ENCODE measurements at regions of chr6 and their contacts with region 1.

Region 1: GRCh38 chr6:113328886-113329381 is 528.2 kb upstream of the MARCKS start:
- DNase-seq: no peak
- CTCF ChIP-seq: no peak

Region 2: GRCh38 chr6:113340371-113340770 is 11.4 kb after region 1 on chr6:
- CTCF ChIA-PET with region 1: interaction called, 40 read pairs
- POLR2A ChIA-PET with region 1: no interaction called
- DNase-seq: no peak
- CTCF ChIP-seq: no peak

Measured in GM10248 (cell line).